ENCODE measurements at regions of chr1 and their contacts with region 1.

Region 1: DNA sequence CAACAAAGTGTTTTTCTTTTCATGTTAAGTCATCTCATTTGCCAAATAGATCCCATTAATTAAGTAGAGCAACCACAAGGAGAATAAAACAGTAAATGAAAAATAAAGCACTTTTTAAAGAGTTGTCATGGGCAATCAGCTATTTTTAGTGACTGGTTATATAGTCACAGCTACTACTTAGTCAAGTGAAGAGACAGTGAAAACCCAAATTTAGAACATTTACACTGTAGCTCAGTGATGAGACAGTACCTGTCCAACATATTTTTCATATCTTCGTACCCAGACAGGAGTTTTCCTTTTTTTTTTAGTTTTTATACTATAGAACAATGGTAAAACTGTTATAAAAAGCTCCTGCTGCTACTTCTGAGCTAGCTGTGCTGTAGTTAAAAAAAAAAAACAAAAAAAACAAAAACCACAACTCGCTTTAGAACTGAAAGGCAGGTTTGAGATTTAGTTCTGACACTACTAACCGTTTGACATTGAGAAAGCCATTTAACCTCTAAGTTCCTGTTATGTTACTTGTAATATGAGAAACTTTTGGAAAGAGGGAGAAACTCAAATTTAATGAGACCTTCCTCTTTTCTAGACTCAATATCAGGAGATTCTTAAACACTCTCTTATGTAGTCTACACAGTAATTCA is 777.5 kb downstream of the ADGRL2 start:
- DNase-seq: no peak
- H3K4me3 ChIP-seq: no peak overlapping the region
- H3K27ac ChIP-seq: no peak overlapping the region
- H3K4me1 ChIP-seq: no peaks in the 10 kb centered on the region
- H3K27me3 ChIP-seq: no peaks in the 10 kb centered on the region
- CTCF ChIP-seq: no peak
- POLR2A ChIP-seq: no peak

Region 2: DNA sequence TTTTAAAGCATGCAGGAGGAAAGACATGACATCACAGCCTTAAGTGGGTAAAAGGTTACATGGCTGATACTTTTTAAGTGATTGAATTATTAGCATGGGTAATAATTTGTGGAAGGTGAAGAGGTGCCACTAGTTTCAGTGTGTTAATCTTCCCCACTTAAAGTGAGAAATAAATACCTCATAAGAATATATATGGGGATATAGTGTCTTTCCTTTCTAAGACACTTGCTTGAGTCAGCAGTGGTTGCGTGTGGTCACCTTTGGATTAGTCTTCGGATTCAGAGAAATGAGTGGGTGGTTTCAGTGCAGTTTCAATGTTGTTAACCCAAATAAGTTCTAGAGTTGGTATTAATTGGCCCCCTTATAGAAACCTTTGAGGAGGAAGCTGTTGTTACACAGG is 683.3 kb before region 1 on chr1:
- intact Hi-C with region 1: no loop called
- DNase-seq: no peak
- H3K4me3 ChIP-seq: no peak overlapping the region
- H3K27ac ChIP-seq: no peak overlapping the region
- H3K4me1 ChIP-seq: no peaks in the 10 kb centered on the region
- H3K27me3 ChIP-seq: no peaks in the 10 kb centered on the region
- CTCF ChIP-seq: no peak
- POLR2A ChIP-seq: no peak

Region 3: DNA sequence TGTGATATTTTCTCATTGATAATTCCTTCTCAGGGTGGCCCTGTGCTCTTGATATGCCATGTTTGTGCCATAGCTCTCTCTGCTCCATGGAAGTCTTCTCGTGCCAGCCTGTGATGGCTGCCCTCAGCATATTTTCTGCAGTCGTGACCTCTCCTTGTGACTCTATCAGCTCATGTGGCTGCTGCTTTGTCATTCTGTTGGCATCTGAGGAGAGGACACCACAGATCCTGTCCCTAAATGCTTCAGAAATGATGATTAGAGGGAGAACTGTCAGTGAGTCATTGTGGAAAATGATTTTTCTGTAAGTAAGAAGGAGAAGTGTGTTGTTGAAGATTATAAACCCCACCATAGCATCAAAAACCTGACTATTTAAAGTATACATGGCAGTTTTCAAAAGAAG is 491.5 kb before region 1 on chr1:
- intact Hi-C with region 1: loop called (anchors 10 kb)
- DNase-seq: no peak
- H3K4me3 ChIP-seq: no peak overlapping the region
- H3K27ac ChIP-seq: no peak overlapping the region
- H3K4me1 ChIP-seq: no peaks in the 10 kb centered on the region
- H3K27me3 ChIP-seq: no peaks in the 10 kb centered on the region
- CTCF ChIP-seq: no peak
- POLR2A ChIP-seq: no peak

Region 4: DNA sequence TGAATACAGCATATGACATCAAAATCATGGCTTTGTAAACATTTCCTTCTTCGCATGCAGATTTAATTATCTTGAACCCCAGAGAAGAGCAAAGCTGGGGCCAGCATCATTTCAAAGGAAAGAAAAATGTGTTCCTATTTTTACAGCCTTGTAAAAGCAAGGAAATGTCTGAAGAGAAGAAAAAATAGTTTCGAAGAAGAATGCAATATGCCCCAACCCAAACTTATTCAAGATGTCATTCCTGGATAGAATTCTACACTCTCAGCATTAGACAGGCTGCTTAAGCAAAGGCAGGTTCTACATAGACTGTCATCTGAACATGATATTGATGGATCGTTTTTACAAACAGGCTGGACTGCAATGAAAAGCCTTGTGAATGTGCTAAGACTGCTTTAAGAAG is 519.9 kb after region 1 on chr1:
- intact Hi-C with region 1: no loop called
- DNase-seq: no peak
- H3K4me3 ChIP-seq: no peak overlapping the region
- H3K27ac ChIP-seq: no peak overlapping the region
- H3K4me1 ChIP-seq: no peaks in the 10 kb centered on the region
- H3K27me3 ChIP-seq: no peaks in the 10 kb centered on the region
- CTCF ChIP-seq: no peak
- POLR2A ChIP-seq: no peak

Measured in breast epithelium (tissue), 4 donors.